Lower leg skin (tissue), 4 donors: ENCODE measurements at regions of chr7 and their contacts with region 1.

Region 1: DNA sequence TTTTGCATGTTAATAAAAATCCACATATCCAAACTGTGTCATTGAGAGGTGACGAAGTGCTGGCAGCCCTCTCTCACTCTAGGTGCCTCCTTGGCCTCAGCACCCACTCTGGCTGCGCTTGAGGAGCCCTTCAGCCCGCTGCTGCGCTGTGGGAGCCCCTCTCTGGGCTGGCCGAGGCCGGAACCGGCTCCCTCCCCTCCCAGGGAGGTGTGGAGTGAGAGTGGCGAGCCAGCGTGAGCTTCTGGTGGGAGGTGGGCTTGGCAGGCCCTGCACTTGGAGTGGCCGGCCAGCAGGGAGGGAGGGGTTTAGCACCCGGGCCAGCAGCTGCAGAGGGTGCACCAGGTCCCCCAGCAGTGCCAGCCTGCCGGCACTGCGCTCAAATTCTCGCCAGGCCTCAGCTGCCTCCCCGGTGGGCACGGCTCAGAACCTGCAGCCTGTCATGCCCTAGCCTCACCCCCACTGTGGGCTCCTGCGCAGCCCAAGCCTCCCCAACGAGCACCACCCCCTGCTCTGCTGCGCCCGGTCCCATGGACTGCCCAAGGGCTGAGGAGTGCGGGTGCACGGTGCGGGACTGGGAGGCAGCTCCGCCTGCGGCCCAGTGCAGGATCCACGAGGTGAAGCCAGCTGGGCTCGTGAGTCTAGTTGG is 11.1 kb downstream of the YAE1 start:
- DNase-seq: no peak
- H3K4me3 ChIP-seq: no peak overlapping the region
- CTCF ChIP-seq: no peak
- POLR2A ChIP-seq: no peak

Region 2: GRCh38 chr7:39594988-39595620 is 17.8 kb after region 1 on chr7:
- intact Hi-C with region 1: no loop called
- DNase-seq: no peak
- H3K4me3 ChIP-seq: no peak overlapping the region
- CTCF ChIP-seq: no peak
- POLR2A ChIP-seq: no peak

Region 3: DNA sequence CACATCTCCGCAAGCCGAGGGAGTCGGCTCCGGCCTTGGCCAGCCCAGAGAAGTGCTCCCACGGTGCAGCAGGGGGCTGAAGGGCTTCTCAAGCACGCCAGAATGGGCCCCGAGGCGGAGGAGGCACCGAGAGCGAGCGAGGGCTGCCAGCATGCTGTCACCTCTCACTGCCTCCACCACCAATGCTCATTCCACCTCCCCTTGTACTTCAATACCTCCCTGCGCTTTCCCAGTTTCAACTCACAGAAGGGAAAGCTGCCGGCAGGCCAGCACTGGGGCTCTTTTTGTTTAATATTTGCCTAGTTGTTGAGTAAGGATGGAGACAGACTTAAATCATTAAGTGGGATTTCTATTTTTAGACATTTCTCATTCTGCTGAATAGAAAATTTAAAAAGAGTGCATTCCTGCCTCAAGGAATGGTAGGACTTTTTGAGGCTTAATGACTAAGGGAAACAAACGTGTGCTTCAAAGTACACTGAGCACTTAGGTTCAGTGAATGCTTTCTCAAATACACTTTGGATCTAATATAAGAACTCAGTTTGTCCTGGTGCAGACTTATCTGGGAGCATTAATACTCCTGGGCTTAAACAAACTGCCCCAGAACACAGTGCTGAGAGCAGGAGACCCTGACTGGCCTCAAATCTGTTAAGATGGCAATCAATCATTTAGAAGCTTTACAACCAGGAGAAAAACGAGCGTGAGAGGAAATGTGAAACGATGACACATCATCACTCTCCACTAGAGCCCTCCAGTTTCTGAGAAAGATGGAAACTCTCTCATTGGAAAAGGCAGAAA is 177.2 kb after region 1 on chr7:
- intact Hi-C with region 1: loop called (anchors 5 kb)
- DNase-seq: no peak
- H3K4me3 ChIP-seq: no peak overlapping the region
- CTCF ChIP-seq: no peak
- POLR2A ChIP-seq: no peak